Activated naive CD4-positive, alpha-beta T cell treated with anti-CD3 and anti-CD28 coated beads for 36 hours (primary cell): ENCODE measurements at regions of chr18 and their contacts with region 1.

Region 1: GRCh38 chr18:31722369-31722957 is 38.1 kb upstream of the B4GALT6 start:
- DNase-seq: peak; percentile 92
- H3K4me3 Mint-ChIP-seq: no peak overlapping the region
- H3K27ac Mint-ChIP-seq: no peak overlapping the region
- H3K4me1 Mint-ChIP-seq: peaks cover 7% of the 10 kb centered on the region
- H3K27me3 Mint-ChIP-seq: peaks cover 31% of the 10 kb centered on the region

Region 2: DNA sequence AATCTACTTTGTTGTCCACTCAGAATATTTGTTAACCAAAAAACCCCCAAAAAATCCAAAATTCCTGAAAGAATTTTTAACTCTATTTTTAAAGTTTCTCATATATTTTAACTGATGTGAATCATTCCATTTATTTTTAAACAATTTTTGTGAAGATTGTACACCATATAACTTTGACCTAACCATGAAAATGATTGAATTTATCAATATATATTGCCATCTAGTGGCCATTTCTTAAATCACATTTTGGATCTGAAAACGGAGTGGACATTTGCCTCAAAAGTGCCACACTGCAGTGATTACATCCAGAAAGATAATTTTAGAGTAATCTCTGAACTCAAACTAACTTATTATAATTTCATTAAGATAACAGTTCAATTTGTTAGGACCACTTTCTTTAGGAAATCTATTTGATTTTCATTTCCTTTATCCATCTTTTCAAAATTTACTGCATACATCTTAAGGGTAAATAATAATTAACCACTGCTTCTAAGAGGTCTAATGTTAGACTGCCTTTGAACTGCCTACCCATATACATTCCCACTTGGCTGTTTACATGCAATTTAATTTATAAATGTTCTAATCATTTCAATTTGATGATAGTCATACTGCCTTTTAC is 751.0 kb before region 1 on chr18:
- CTCF ChIA-PET with region 1: no interaction called
- intact Hi-C with region 1: loop called (anchors 1 kb)
- DNase-seq: no peak
- H3K4me3 Mint-ChIP-seq: no peak overlapping the region
- H3K27ac Mint-ChIP-seq: no peak overlapping the region
- H3K4me1 Mint-ChIP-seq: no peaks in the 10 kb centered on the region
- H3K27me3 Mint-ChIP-seq: peaks cover 4% of the 10 kb centered on the region

Region 3: DNA sequence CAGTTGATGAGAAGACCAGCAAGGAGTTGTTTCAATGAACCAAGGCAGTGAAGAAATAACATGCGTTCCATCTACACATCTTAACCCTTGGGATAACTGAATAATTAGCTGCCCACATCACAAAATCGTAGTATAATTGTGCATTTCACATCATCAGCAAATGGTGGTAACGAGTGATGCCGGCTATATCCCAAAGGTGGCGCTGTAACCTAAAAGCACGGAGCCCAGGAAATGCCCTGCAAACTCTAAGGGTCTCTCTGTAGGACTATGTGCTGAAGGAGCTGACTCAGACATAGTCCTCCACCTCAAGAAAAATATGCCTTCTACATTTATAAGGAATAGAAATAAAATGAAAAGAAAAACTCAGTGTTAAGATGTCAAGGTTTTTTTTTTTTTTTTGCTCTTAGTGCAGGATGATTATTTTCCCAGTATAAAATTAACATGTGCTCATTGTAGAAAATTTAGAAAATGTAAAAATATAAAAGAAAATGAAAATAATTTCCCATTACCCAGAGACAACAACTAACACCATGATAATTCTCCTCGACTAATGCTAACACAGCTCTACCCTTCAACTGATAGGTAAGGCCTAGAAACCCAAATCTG is 298.0 kb before region 1 on chr18:
- CTCF ChIA-PET with region 1: no interaction called
- intact Hi-C with region 1: loop called (anchors 1 kb)
- DNase-seq: peak; percentile 32
- H3K4me3 Mint-ChIP-seq: no peak overlapping the region
- H3K27ac Mint-ChIP-seq: no peak overlapping the region
- H3K4me1 Mint-ChIP-seq: no peaks in the 10 kb centered on the region
- H3K27me3 Mint-ChIP-seq: no peaks in the 10 kb centered on the region

Region 4: GRCh38 chr18:31555971-31556747 is 166.3 kb before region 1 on chr18:
- CTCF ChIA-PET with region 1: interaction called, 138 read pairs
- intact Hi-C with region 1: loop called (anchors 1 kb)
- DNase-seq: peak; percentile 65
- H3K4me3 Mint-ChIP-seq: no peak overlapping the region
- H3K27ac Mint-ChIP-seq: no peak overlapping the region
- H3K4me1 Mint-ChIP-seq: no peaks in the 10 kb centered on the region
- H3K27me3 Mint-ChIP-seq: peaks cover 9% of the 10 kb centered on the region

Region 5: DNA sequence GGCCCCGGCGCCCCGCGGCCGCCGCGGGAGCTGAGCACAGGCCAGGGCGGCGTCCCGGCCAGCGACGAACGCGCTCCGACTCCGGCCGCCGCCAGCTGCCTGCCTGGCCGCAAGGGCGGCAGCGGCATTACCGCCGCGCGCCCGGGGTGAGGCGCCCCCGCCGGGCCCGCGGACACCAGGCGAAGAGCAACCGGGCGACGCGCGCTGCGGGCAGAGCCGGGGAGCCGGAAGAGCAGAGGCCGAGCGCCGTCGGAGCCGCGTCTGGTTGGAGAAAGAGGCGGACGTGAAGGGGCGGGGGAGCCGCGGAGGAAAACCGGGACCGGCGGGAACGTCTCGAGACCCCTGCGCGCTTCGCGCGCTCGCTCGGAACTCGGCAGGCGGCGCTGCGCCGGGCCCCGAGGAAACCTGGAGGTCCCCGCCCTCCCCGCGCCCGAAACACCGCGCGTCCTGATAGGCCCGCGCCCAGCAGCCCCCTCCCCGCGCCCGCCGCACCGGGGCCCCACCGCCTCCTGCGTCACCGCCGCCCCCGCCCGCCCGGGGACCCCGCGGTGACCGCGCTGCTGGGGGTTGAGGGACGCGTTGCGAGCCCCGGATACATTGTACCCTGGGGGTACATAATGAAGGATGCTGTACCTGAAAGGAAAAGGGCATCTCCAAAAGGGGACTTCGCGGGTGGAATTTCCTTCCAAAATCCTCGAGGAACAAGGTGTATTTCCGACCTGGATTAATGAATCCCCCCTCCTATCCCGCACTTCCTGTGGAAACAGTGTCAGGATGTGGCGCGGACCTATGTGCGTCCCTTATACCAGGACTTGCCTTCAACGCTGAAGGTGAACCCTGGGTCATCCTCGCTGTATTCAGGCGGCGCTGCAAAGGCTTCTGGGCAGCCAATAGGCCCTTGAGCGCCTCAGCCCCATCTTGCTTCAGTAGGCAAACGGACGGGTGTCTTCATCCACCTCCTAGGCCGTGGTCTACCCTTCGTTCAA is 37.1 kb before region 1 on chr18:
- CTCF ChIA-PET with region 1: interaction called, 5 read pairs
- intact Hi-C with region 1: loop called (anchors 1 kb)
- DNase-seq: peak; percentile 73
- H3K4me3 Mint-ChIP-seq: peak overlapping the region; percentile 84
- H3K27ac Mint-ChIP-seq: no peak overlapping the region
- H3K4me1 Mint-ChIP-seq: peaks cover 16% of the 10 kb centered on the region
- H3K27me3 Mint-ChIP-seq: peaks cover 38% of the 10 kb centered on the region

Region 6: DNA sequence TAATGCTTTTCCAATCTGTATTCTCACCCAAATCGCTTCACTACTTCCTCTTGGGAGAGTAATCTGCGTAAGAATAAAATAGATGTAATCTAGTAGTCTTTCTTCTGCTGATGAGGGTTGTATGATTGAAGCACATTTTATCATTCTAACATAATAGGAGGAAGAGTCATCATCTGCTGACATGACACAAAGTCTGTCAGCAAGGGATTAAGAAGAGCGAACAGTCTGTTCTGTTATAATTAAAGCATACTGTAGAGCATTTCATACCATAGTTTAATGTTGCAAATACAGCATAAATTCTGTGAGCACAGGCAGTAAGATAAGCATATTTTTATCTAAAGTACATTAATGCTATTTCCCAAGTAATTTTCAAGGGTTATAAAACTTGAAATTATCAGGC is 27.8 kb after region 1 on chr18:
- CTCF ChIA-PET with region 1: no interaction called
- intact Hi-C with region 1: no loop called
- DNase-seq: no peak
- H3K4me3 Mint-ChIP-seq: no peak overlapping the region
- H3K27ac Mint-ChIP-seq: no peak overlapping the region
- H3K4me1 Mint-ChIP-seq: no peaks in the 10 kb centered on the region
- H3K27me3 Mint-ChIP-seq: no peaks in the 10 kb centered on the region

Region 7: DNA sequence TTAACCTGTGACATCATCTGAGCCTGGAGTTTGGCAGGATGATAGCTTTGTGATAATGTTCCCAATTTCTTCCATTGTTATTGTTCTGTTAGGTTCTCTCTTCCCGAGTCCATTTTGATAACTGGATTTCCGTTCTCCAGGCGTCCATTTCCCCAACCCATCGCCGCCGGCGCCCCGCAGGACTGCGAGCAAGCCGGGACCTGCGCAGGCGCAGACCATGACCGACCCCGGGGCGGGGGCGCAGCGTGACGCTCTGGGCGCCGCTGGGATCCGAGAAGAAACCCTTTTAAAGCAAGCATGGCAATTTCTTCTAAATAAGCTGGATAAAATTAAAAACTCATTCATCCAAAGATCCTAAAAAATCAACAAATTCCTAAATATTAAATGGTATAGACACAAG is 38.2 kb after region 1 on chr18 and contains the start of gene SLC25A52:
- CTCF ChIA-PET with region 1: no interaction called
- intact Hi-C with region 1: no loop called
- DNase-seq: no peak
- H3K4me3 Mint-ChIP-seq: no peak within 1 kb of the TSS
- H3K27ac Mint-ChIP-seq: no peak within 1 kb of the TSS
- H3K4me1 Mint-ChIP-seq: no peaks in the 10 kb centered on the region
- H3K27me3 Mint-ChIP-seq: no peaks in the 10 kb centered on the region
- total RNA-seq, gene SLC25A52: not detected

Region 8: GRCh38 chr18:31819106-31819924 is 96.9 kb after region 1 on chr18:
- CTCF ChIA-PET with region 1: interaction called, 4 read pairs
- intact Hi-C with region 1: loop called (anchors 1 kb)
- DNase-seq: no peak
- H3K4me3 Mint-ChIP-seq: no peak overlapping the region
- H3K27ac Mint-ChIP-seq: no peak overlapping the region
- H3K4me1 Mint-ChIP-seq: no peaks in the 10 kb centered on the region
- H3K27me3 Mint-ChIP-seq: no peaks in the 10 kb centered on the region

Region 9: DNA sequence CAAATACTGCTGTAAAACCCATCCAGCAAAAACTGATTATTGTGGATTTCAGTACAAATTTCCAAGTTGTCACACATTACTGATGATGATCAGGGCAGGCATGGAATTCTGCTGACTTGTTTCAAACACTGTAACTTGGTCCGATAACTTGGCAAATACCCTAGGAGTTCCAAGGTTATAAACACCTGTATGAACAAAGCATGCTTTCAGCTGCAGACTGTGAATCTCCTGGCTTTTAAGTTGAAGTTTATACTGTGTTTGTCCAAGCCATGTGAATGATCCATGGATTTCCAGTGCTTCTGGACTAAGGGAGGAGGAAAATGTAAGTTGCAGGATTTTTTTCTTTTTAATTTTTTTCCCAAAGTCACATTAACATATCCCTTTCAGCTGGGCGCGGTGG is 108.2 kb after region 1 on chr18:
- CTCF ChIA-PET with region 1: no interaction called
- intact Hi-C with region 1: no loop called
- DNase-seq: no peak
- H3K4me3 Mint-ChIP-seq: no peak overlapping the region
- H3K27ac Mint-ChIP-seq: no peak overlapping the region
- H3K4me1 Mint-ChIP-seq: no peaks in the 10 kb centered on the region
- H3K27me3 Mint-ChIP-seq: no peaks in the 10 kb centered on the region